PC-9 (cell line): ENCODE measurements at regions of chr4 and their contacts with region 1.

Region 1: DNA sequence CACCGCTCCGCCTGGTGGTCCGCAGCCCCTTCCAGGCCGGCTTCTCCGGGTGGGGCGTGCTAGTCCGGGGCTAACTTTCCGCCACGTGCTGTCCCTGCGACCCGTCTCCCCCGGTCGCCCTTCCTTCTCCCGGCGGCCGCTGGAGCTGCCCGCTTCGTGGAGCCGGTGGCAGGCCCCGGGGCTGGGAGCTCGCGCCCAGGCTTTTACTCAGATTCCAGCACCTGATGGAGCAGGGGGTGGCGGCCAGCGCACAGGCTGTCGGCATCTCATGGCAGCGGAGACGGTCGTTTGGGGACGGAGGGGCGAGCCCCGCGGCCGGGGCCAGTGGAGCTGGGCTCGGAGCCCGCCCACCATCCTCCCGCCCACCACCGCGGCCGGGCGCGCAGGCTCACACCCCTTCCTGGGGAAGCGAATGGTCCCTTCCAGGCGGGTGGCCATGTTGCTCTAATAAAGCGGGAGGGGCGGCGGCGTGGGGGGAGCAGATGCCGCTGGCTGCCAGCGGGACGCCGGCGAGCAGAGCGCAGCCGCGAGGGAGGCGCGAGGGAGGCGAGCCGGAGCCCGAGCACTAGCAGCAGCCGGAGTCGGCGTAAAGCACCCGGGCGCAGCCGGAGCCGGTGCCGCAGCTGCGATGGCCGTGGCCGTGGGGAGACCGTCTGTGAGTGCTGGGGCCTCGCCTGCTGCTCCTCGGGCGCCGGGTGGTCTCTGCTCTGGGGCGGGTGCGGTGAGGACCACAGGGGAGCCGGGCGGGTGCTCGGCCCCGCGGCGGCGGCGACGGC is at the start of gene SEPTIN11:
- DNase-seq: peak; percentile 67 to 85
- H3K4me3 ChIP-seq: peak within 1 kb of the TSS; percentile 70
- H3K27ac ChIP-seq: peak within 1 kb of the TSS; percentile 51
- H3K4me1 ChIP-seq: peaks cover 14% of the 10 kb centered on the region; the same call in 1 of the 2 replicates
- H3K27me3 ChIP-seq: no peaks in the 10 kb centered on the region
- CTCF ChIP-seq: no peak
- total RNA-seq, gene SEPTIN11: 38.8 and 48.1 TPM in 2 replicates

Region 2: GRCh38 chr4:76704133-76704881 is 245.2 kb before region 1 on chr4:
- CTCF ChIA-PET with region 1: no interaction called
- POLR2A ChIA-PET with region 1: no interaction called
- intact Hi-C with region 1: no loop called
- DNase-seq: peak; percentile 51 to 87
- H3K4me3 ChIP-seq: peak overlapping the region; percentile 35; the same call in 1 of the 2 replicates
- H3K27ac ChIP-seq: peak overlapping the region; percentile 95
- H3K4me1 ChIP-seq: peaks cover 66% of the 10 kb centered on the region
- H3K27me3 ChIP-seq: no peaks in the 10 kb centered on the region
- CTCF ChIP-seq: no peak

Region 3: GRCh38 chr4:76881375-76881774 is 68.1 kb before region 1 on chr4:
- CTCF ChIA-PET with region 1: no interaction called
- POLR2A ChIA-PET with region 1: no interaction called
- intact Hi-C with region 1: no loop called
- DNase-seq: peak; percentile 34 to 84
- H3K4me3 ChIP-seq: no peak overlapping the region; the same call in 1 of the 2 replicates
- H3K27ac ChIP-seq: peak overlapping the region; percentile 34; the same call in 1 of the 2 replicates
- H3K4me1 ChIP-seq: peaks cover 24% of the 10 kb centered on the region
- H3K27me3 ChIP-seq: no peaks in the 10 kb centered on the region
- CTCF ChIP-seq: no peak

Region 4: DNA sequence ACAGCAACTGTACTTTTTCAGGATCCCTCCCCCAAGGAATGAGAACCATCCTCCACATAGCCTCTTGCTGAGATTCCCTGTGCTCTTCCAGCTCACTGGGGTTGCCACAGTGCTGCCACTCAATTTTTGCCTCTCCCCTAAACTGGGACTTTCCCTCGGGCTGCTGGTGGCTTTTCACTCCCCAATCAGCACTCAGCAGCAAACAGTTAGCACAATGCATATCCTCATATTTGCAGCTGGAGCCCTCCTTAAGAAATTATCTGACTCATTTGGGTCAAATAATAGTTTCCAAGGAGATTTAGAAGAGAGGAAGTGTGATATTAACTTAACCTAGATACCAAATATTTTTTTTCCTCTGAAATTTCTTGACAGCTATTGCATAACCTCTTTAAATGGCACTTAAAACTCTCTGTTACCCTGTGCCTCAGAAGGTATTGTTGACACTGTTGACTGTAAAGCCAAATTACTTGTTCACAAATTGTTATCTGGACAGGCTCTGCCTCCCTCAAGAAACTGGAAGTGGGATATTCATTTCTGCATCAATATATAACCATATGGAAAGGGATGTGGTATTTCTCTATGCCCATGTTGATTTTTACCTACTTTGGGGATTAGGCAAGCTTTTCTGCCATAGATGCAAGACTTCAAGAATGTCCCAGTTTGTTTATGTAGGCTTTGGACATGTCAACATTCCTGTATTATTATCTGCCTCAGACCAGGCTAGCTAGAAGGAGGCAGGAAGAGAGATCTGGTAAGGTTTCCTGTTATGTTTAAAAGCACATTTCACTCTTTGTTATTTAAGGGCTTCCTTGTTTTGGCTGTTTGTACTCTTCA is 58.1 kb after region 1 on chr4:
- CTCF ChIA-PET with region 1: no interaction called
- POLR2A ChIA-PET with region 1: no interaction called
- intact Hi-C with region 1: loop called (anchors 5 kb)
- DNase-seq: peak; percentile 28 to 73
- H3K4me3 ChIP-seq: no peak overlapping the region
- H3K27ac ChIP-seq: 0 out of 2 replicates have a peak overlapping the region, but pooled peaks have one; percentile 26
- H3K4me1 ChIP-seq: peaks cover 17% of the 10 kb centered on the region
- H3K27me3 ChIP-seq: no peaks in the 10 kb centered on the region
- CTCF ChIP-seq: no peak